Activated CD4-positive, alpha-beta memory T cell treated with anti-CD3 and anti-CD28 coated beads, Interleukin-2, amount 10 ng/mL, durations not matched to agents 7 days and 5 days (primary cell): ENCODE measurements at regions of chr2 and their contacts with region 1.

Region 1: DNA sequence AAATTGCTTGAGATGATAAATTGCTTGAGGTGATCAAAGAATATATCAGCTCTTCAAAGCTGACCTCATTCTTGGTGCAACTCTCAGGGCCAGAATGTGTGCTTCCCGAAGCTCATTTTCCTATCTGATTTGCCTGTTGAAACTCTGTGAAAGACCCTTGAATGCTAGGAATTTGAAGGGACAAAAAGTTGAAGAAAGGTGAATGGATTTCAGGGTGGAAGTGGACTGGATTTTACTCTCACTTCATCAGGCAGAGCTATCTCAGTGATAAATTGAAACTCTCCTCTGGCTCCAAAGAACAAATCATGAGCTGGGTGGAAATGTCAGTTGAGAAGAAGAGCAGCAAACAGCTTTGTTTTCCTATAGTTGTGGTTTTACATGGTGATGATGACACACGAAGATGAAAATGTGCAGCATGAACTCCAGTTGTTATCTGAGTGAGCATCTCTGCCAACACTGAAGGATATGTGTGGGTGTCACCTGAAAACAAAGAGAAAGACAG is 34.4 kb downstream of the CD28 start:
- DNase-seq: peak; percentile 51
- H3K4me3 Mint-ChIP-seq: peak overlapping the region; percentile 57
- H3K27ac Mint-ChIP-seq: peak overlapping the region; percentile 95
- H3K4me1 Mint-ChIP-seq: peaks cover 82% of the 10 kb centered on the region
- H3K27me3 Mint-ChIP-seq: no peaks in the 10 kb centered on the region

Region 2: GRCh38 chr2:203706403-203706802 is 34.4 kb before region 1 on chr2 and contains the start of gene CD28:
- CTCF ChIA-PET with region 1: interaction called, 14 read pairs
- POLR2A ChIA-PET with region 1: interaction called, 859 read pairs
- DNase-seq: peak; percentile 95
- H3K4me3 Mint-ChIP-seq: peak within 1 kb of the TSS; percentile 90
- H3K27ac Mint-ChIP-seq: peak within 1 kb of the TSS; percentile 97
- H3K4me1 Mint-ChIP-seq: peaks cover 46% of the 10 kb centered on the region
- H3K27me3 Mint-ChIP-seq: no peaks in the 10 kb centered on the region
- total RNA-seq, gene CD28: 194 to 205 TPM

Region 3: GRCh38 chr2:203730076-203730729 is 10.6 kb before region 1 on chr2:
- CTCF ChIA-PET with region 1: interaction called, 52 read pairs
- POLR2A ChIA-PET with region 1: interaction called, 116 read pairs
- DNase-seq: no peak
- H3K4me3 Mint-ChIP-seq: peak overlapping the region; percentile 28
- H3K27ac Mint-ChIP-seq: peak overlapping the region; percentile 94
- H3K4me1 Mint-ChIP-seq: peaks cover 92% of the 10 kb centered on the region
- H3K27me3 Mint-ChIP-seq: no peaks in the 10 kb centered on the region

Region 4: DNA sequence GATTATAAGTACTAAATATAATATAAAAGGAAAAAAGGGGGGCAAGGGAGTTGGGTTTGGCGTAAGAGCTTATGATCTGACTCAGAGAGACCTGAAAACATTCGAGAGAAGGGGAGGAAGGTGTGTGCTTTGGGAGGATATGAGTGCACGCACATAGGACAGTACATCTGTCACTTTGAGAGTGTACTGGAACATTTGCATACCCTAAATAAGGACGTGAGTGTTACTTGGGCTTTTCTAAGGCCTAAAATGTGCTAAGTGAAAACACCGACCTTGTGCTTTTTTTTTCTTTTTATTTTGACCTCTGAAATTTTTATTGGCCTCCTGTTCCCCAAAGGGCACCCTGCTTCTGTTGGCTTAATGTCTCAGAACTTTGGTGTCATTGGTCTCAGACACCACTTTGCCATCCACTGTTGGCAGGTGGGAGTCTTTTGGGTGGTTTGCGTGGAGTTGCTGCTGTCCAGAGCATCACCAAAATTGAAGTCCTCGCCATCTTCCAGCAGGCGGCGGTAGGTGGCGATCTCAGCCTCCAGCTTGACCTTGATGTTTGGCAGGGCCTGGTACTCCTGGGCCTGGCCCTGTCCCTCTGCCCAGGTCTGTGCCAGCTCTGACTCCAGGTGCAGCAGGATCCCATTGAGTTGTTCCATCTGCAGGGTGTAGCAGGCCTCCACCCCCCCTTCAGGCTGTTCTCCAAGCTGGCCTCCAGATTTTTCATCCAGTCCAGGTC is 23.3 kb after region 1 on chr2:
- CTCF ChIA-PET with region 1: no interaction called
- POLR2A ChIA-PET with region 1: interaction called, 20 read pairs
- DNase-seq: no peak
- H3K4me3 Mint-ChIP-seq: no peak overlapping the region
- H3K27ac Mint-ChIP-seq: peak overlapping the region; percentile 36
- H3K4me1 Mint-ChIP-seq: peaks cover 36% of the 10 kb centered on the region
- H3K27me3 Mint-ChIP-seq: no peaks in the 10 kb centered on the region

Region 5: DNA sequence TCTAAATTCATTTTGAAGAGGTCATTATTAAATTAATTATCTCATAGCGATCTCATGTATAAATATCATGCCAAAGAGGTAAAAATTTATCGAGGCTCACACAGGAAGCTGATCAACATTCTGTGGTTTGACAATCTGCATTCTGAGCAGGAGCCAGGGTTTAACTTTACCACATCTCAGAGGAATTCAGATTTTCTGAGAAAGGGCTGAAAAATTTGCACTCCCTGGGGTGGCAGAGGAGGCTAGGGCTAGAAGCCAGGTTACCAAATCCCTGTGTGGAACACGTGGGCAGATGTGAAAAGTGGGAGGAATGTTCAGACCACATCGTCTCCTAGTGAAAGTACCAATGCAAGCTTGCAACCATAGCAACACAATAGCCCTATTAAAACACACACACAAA is 63.2 kb after region 1 on chr2:
- CTCF ChIA-PET with region 1: no interaction called
- POLR2A ChIA-PET with region 1: interaction called, 22 read pairs
- DNase-seq: peak; percentile 38
- H3K4me3 Mint-ChIP-seq: no peak overlapping the region
- H3K27ac Mint-ChIP-seq: peak overlapping the region; percentile 38
- H3K4me1 Mint-ChIP-seq: peaks cover 68% of the 10 kb centered on the region
- H3K27me3 Mint-ChIP-seq: no peaks in the 10 kb centered on the region